ENCODE measurements at regions of chr7 and their contacts with region 1.

Region 1: DNA sequence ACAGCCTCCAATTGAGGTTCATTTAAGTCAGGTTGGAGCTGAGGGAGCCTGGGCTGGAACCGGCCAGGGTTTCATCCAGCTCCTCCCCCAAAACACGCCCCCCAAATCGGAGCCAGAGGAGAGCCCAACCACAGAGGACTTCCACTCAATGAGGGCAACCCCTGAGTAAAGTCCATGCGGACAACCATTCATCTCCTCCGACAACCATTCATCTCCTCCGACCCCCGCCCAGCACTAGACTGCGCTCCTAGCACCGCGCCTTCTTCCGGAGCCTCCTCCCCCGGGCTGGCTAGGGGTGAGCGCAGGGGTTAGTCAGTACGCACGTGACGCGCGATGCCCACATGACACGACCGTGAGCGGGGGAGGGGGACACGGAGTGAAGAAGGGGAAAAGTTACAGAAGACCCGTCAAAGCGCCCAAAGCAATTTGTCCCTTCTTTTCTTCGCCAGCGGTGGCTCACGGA is 1.4 kb downstream of the MAGI2 start:
- DNase-seq: peak; percentile 97
- ATAC-seq: peak; percentile 88
- H3K4me3 ChIP-seq: peak overlapping the region; percentile 79 to 84 (median 82)
- H3K27ac ChIP-seq: peak overlapping the region; percentile 95
- H3K4me1 ChIP-seq: peaks cover 48% of the 10 kb centered on the region
- H3K27me3 ChIP-seq: no peaks in the 10 kb centered on the region; a peak in 1 of 5 replicates
- CTCF ChIP-seq: no peak
- EP300 ChIP-seq: peak in 1 of 2 experiments; percentile 80; a peak in 2 of 4 replicates
- POLR2A ChIP-seq: peak; percentile 48 to 66; a peak in 3 of 4 replicates
- RAD21 ChIP-seq: no peak

Region 2: DNA sequence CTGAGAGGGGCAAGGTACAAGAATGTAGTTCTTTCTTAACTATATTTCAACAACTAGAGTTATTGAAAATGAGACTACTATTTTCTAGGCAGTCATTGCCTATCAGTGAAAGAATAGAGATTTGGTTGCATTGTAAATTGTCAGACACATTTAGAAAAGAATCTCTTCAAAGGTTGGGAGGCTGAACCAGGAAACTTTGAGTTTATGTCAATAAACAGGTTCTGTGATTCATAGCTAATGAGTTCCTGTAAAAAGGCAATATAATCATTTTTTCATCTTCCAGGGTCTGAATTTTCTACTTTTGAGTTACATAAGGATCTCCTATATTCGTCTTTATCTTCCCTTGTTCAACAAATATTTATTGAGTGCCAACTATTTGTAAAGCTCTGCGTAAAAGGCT is 45.7 kb before region 1 on chr7:
- CTCF ChIA-PET with region 1: no interaction called
- POLR2A ChIA-PET with region 1: interaction called, 3 read pairs
- in situ Hi-C with region 1: loop called (anchors 5 kb)
- intact Hi-C with region 1: loop called (anchors 2 kb)
- DNase-seq: peak; percentile 3
- ATAC-seq: no peak
- H3K4me3 ChIP-seq: no peak overlapping the region; a peak in 1 of 6 replicates
- H3K27ac ChIP-seq: peak overlapping the region; percentile 13
- H3K4me1 ChIP-seq: peaks cover 35% of the 10 kb centered on the region
- H3K27me3 ChIP-seq: no peaks in the 10 kb centered on the region
- CTCF ChIP-seq: no peak
- EP300 ChIP-seq: no peak; a peak in 1 of 4 replicates
- POLR2A ChIP-seq: no peak
- RAD21 ChIP-seq: no peak

Region 3: GRCh38 chr7:79434098-79434497 is 18.0 kb before region 1 on chr7:
- CTCF ChIA-PET with region 1: no interaction called
- POLR2A ChIA-PET with region 1: interaction called, 12 read pairs
- in situ Hi-C with region 1: no loop called
- intact Hi-C with region 1: no loop called
- DNase-seq: no peak
- ATAC-seq: no peak
- H3K4me3 ChIP-seq: no peak overlapping the region
- H3K27ac ChIP-seq: peak overlapping the region; percentile 62
- H3K4me1 ChIP-seq: peaks cover 34% of the 10 kb centered on the region
- H3K27me3 ChIP-seq: no peaks in the 10 kb centered on the region
- CTCF ChIP-seq: no peak
- EP300 ChIP-seq: no peak
- POLR2A ChIP-seq: no peak
- RAD21 ChIP-seq: no peak

Region 4: DNA sequence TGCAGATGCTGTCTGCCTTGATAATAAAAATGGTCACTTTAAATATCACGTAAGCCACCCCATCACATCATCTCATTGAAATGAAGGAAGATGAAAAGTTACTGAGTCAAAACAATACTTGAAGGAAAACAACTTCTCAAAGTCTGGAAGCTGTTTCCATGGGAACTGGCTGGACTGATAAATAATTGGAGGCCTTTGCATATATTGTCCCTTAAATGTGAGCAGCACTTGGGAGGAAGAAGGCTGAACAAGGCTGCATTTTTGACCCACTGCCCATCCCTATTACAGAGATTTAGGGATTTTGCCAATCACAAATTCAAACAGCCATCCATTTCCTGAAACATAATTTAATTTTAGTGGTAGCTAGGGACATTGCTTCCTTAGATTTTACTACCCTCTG is 19.6 kb after region 1 on chr7:
- CTCF ChIA-PET with region 1: no interaction called
- POLR2A ChIA-PET with region 1: no interaction called
- in situ Hi-C with region 1: no loop called
- intact Hi-C with region 1: no loop called
- DNase-seq: no peak
- ATAC-seq: no peak
- H3K4me3 ChIP-seq: no peak overlapping the region
- H3K27ac ChIP-seq: no peak overlapping the region
- H3K4me1 ChIP-seq: no peaks in the 10 kb centered on the region
- H3K27me3 ChIP-seq: no peaks in the 10 kb centered on the region
- CTCF ChIP-seq: no peak
- EP300 ChIP-seq: no peak
- POLR2A ChIP-seq: no peak
- RAD21 ChIP-seq: no peak

Measured in HepG2 (cell line).